ENCODE measurements at regions of chr12 and their contacts with region 1.

Region 1: DNA sequence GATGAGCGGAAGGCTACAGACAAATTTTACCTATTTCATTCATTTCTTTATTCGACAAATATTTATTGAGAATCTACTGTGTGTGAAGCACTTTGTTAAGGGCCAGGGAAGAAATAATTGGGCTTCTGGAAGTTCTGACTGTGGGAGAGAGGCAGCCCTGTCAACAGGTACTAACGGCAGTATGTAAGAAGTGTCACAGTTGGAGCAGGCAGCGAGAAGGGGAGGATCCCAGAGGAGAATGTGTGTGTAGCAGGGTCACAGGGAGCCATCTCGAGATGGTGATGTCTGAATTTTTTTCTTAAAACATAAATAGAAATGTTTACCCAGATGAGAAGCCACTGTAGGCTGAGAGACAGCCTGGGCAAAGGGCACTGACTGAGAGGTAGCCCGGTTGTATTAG is 163.3 kb upstream of the SLC38A2 start:
- DNase-seq: no peak
- ATAC-seq: no peak
- H3K4me3 ChIP-seq: no peak overlapping the region
- H3K27ac ChIP-seq: no peak overlapping the region
- H3K4me1 ChIP-seq: no peaks in the 10 kb centered on the region; the same call in 1 of the 2 replicates
- H3K27me3 ChIP-seq: no peaks in the 10 kb centered on the region
- CTCF ChIP-seq: no peak

Region 2: GRCh38 chr12:46516933-46517578 is 18.9 kb before region 1 on chr12:
- CTCF ChIA-PET with region 1: no interaction called
- POLR2A ChIA-PET with region 1: no interaction called
- in situ Hi-C with region 1: no loop called
- intact Hi-C with region 1: loop called (anchors 1 kb)
- DNase-seq: no peak
- ATAC-seq: no peak
- H3K4me3 ChIP-seq: no peak overlapping the region
- H3K27ac ChIP-seq: peak overlapping the region; percentile 54; the same call in 1 of the 2 replicates
- H3K4me1 ChIP-seq: peaks cover 4% of the 10 kb centered on the region; the same call in 1 of the 2 replicates
- H3K27me3 ChIP-seq: no peaks in the 10 kb centered on the region
- CTCF ChIP-seq: no peak